ENCODE measurements at regions of chr16 and their contacts with region 1.

Region 1: GRCh38 chr16:57591086-57591869 is 37.2 kb upstream of the ADGRG1 start:
- DNase-seq: peak; percentile 86
- ATAC-seq: peak; percentile 92
- H3K4me3 ChIP-seq: peak overlapping the region; percentile 60
- H3K27ac ChIP-seq: peak overlapping the region; percentile 99
- H3K4me1 ChIP-seq: peaks cover 16% of the 10 kb centered on the region
- H3K27me3 ChIP-seq: no peaks in the 10 kb centered on the region
- CTCF ChIP-seq: peak; percentile 95

Region 2: GRCh38 chr16:57576429-57576870 is 14.8 kb before region 1 on chr16:
- CTCF ChIA-PET with region 1: interaction called, 10 read pairs
- POLR2A ChIA-PET with region 1: no interaction called
- intact Hi-C with region 1: loop called (anchors 2 kb)
- DNase-seq: peak; percentile 79
- ATAC-seq: peak; percentile 93
- H3K4me3 ChIP-seq: no peak overlapping the region
- H3K27ac ChIP-seq: no peak overlapping the region
- H3K4me1 ChIP-seq: no peaks in the 10 kb centered on the region
- H3K27me3 ChIP-seq: no peaks in the 10 kb centered on the region
- CTCF ChIP-seq: peak; percentile 87

Region 3: DNA sequence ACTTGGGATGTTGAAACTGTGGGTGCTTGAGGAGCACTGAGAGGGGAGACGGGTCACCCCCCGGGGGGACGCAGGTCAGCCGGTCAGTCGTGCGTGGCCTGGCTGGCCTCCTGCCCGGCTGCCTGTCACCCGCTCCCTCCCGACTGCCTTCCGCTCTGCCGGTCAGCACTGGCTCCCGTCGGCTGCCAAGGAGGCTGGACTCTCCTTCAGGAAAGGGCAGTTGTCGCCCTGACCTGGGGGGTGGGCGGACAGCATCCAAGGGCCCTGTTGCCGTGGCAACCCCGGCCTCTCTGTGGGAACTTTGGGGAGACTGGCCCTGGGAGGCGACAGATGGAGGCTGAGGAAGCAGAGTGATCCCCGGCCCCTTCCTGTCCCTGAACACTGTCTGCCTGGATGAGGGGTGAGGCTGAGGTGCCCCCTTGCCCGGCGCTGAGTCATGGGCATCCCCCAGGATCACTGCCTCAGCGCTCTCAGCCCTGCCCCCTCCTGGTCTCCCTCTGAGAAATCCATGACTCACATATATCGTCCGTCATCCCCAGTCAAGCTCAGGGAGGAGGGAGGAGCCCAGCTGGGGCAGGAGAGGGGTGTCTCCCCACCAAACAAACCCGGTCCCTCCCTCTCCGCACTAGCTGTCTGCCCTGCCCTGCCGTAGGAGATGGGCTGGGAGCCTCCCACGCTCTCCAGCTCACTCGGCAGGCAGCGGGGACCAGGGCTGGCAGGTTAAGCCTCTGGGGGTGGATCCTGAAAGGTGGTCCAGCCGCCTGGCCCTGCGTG is 36.9 kb after region 1 on chr16 and contains the start of gene ADGRG1:
- CTCF ChIA-PET with region 1: interaction called, 7 read pairs
- POLR2A ChIA-PET with region 1: no interaction called
- intact Hi-C with region 1: loop called (anchors 2 kb)
- DNase-seq: peak; percentile 92
- ATAC-seq: peak; percentile 76
- H3K4me3 ChIP-seq: peak within 1 kb of the TSS; percentile 71
- H3K27ac ChIP-seq: peak within 1 kb of the TSS; percentile 94
- H3K4me1 ChIP-seq: peaks cover 63% of the 10 kb centered on the region
- H3K27me3 ChIP-seq: no peaks in the 10 kb centered on the region
- CTCF ChIP-seq: peak; percentile 10; the same call in 1 of the 2 replicates
- total RNA-seq, gene ADGRG1: 33.7 and 41.5 TPM in 2 replicates

Region 4: DNA sequence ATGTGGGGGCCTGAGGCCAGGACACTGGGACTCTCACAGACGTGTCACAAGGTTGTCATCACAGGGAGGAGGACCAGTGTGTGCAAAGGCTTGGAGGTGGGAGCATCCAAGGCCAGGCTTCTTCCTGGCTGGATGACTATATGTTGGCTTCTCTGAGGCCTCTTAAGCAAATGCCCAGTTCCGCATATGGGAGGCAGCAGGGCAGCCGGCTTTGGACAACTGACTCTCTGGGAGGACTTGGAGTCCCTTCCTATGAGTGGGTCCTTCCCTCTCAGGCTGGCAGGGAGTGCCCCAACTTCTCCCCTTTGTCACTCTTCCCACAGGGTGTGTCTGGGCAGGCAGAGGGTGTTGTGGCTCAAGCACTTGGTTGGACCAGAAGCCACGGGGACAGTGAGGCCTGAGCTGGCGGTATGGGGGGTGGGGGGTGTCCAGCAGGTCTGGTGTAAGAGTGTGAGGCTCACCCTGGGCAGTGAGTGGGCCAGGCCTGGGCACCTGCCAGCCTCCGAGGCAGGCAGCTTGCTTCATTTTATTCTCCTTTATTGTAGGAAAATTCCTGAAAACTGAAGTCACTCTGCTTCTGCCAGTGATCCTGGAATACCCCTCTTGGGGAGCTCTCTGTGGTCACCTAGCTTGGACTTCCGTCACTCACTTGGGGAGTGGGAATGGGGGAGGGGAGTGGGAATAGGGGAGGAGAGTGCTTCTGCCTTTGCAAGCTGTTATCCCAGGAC is 52.0 kb after region 1 on chr16:
- CTCF ChIA-PET with region 1: interaction called, 16 read pairs
- POLR2A ChIA-PET with region 1: interaction called, 3 read pairs
- intact Hi-C with region 1: loop called (anchors 2 kb)
- DNase-seq: peak; percentile 73
- ATAC-seq: peak; percentile 57
- H3K4me3 ChIP-seq: no peak overlapping the region
- H3K27ac ChIP-seq: peak overlapping the region; percentile 86
- H3K4me1 ChIP-seq: peaks cover 59% of the 10 kb centered on the region
- H3K27me3 ChIP-seq: no peaks in the 10 kb centered on the region
- CTCF ChIP-seq: no peak

Region 5: DNA sequence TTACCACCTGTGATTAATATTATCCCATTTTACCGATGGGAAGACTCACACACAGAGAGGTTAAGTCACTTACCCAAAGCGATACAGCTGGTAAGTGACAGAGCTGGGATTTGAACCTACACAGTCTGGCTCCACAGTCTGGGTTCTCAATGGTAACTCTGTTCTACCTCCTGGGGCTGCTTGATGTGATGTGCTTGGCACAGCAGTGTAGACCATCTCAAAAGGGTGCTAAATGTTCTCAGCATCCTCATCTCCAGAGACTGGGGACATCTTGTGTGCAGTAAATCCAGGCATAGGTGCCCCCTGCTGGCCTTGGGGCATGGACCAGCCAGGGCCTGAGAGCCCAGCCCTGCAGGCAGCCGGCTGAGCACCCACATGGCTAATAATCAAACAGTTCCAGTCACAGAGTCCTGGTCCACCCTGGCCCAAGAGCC is 128.9 kb after region 1 on chr16:
- CTCF ChIA-PET with region 1: no interaction called
- POLR2A ChIA-PET with region 1: no interaction called
- intact Hi-C with region 1: loop called (anchors 5 kb)
- DNase-seq: peak; percentile 54
- ATAC-seq: peak; percentile 93
- H3K4me3 ChIP-seq: no peak overlapping the region
- H3K27ac ChIP-seq: no peak overlapping the region
- H3K4me1 ChIP-seq: no peaks in the 10 kb centered on the region
- H3K27me3 ChIP-seq: no peaks in the 10 kb centered on the region
- CTCF ChIP-seq: peak; percentile 75